ENCODE measurements at regions of chr10 and their contacts with region 1.

Region 1: GRCh38 chr10:63217120-63217605 is 84.0 kb downstream of the NRBF2 start:
- DNase-seq: peak; percentile 23
- H3K4me3 ChIP-seq: no peak overlapping the region
- CTCF ChIP-seq: peak; percentile 47

Region 2: DNA sequence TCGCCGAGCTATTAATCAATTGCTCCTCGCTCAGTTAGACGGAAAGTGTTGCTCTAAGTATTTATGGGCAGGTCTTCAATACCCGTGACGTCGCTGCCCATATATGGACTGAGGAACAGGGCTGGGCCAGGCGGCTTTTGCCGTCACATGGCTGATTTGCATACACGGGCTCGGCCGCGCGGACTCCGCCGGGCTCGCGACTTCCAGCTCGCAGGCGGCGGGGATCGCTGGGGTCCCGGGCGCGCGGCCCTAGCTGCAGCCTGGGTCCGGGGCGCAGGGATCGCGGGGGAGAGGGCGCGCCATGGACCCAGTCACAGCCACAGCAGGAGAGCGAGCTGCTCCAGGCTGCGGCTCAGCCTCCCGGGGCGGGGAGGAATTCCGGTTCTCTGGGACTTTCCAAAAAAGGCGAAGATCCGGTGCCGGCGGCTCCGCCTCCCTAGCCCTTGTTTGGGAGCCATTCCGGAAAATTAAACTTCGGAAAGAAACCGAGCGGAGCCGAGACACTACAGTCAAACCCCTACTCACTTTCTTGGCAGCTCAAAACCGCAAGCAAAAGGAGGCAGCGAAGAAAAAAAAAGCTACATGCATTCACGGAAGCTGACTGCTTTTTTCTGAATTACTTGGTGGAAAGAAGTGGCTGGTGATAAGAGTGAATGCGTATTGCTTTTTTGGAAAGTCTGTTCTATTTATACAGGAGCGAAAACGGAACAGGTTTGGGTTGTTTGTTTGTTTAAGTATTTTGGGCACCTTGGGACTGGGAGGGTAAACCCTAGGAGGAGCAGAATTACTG is 400.6 kb before region 1 on chr10 and contains the start of gene EGR2:
- in situ Hi-C with region 1: no loop called
- DNase-seq: peak; percentile 89
- H3K4me3 ChIP-seq: peak within 1 kb of the TSS; percentile 64
- CTCF ChIP-seq: no peak

Region 3: DNA sequence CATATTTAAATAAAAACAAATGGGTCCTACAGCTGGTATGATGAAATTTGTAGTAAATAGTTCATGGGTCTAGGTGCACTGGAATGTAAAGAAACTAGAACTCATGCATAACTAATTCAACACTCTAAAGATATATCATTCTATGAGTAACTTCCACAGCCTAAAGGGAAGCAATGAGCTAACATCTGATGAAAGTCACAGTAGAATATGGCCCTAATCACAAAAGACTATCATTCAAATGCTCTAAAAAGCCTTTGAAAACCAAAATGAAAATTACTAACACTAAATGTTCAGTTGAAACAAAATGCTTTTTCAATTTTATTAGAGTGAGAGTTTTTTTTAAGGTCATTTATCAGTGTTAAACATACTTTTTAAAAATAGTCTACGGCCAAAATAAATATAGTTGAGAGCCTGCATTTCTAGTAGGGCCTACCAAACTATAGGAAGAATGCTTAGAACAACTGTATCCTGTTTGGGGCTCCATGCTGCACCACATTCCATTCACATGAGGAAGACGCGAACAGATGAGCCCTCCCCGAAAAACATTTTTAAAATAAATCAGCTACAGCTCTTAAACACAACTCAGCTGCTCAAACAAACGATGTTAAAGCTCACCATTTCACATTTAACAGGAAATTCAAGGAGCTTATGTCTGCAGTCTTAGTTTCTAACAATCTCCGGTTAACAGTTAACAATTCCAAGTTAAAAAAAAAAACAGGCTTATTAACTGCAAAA is 50.4 kb after region 1 on chr10:
- in situ Hi-C with region 1: no loop called
- DNase-seq: peak; percentile 66
- H3K4me3 ChIP-seq: peak overlapping the region; percentile 72
- CTCF ChIP-seq: no peak

Region 4: DNA sequence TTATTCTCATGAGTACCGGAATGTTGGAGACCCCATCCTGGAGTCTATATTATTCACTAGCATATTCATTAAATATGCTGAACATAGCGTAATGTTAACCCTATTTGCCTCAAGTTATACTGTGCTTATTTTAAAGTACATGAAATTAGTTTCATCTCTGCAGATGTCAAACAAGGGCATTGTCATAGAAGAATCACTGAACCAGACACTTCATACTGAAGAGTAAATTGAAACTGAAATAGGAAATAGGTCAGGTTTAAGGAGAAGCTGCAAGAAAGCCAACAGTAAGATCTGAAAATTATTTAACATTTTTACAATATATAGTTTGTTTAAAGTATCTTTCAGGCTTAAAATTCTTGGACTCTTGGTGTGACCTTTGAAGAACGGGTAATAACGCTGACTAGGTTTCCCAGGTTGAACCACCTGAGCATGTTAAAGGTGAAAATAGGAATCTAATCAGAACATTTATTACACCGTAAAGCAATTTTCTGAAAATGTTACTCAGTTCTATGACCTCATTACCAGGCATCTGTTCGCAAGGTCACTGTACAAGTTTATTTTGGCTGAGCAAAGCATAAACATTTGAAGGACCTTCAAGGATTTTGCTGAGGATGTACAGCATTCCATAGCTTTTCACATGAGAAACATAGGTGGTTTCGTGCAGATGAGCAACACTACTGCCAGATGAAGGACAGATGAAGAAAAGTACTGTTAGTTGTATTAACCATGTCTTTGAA is 386.7 kb after region 1 on chr10:
- in situ Hi-C with region 1: loop called (anchors 25 kb)
- DNase-seq: peak; percentile 35
- H3K4me3 ChIP-seq: no peak overlapping the region
- CTCF ChIP-seq: no peak

Measured in astrocyte of the cerebellum (primary cell).